MCF 10A (cell line): ENCODE measurements at regions of chr4 and their contacts with region 1.

Region 1: GRCh38 chr4:6963139-6963611 is 53.5 kb downstream of the TBC1D14 start:
- DNase-seq: no peak
- H3K4me3 Mint-ChIP-seq: no peak overlapping the region
- H3K27ac Mint-ChIP-seq: no peak overlapping the region
- H3K4me1 Mint-ChIP-seq: peaks cover 5% of the 10 kb centered on the region
- H3K27me3 Mint-ChIP-seq: no peaks in the 10 kb centered on the region
- CTCF ChIP-seq: no peak

Region 2: GRCh38 chr4:6974138-6974848 is 11.1 kb after region 1 on chr4:
- CTCF ChIA-PET with region 1: interaction called, 18 read pairs
- POLR2A ChIA-PET with region 1: no interaction called
- intact Hi-C with region 1: no loop called
- DNase-seq: peak; percentile 87
- H3K4me3 Mint-ChIP-seq: no peak overlapping the region
- H3K27ac Mint-ChIP-seq: no peak overlapping the region
- H3K4me1 Mint-ChIP-seq: no peaks in the 10 kb centered on the region
- H3K27me3 Mint-ChIP-seq: no peaks in the 10 kb centered on the region
- CTCF ChIP-seq: peak; percentile 95